ENCODE measurements at regions of chr1 and their contacts with region 1.

Region 1: DNA sequence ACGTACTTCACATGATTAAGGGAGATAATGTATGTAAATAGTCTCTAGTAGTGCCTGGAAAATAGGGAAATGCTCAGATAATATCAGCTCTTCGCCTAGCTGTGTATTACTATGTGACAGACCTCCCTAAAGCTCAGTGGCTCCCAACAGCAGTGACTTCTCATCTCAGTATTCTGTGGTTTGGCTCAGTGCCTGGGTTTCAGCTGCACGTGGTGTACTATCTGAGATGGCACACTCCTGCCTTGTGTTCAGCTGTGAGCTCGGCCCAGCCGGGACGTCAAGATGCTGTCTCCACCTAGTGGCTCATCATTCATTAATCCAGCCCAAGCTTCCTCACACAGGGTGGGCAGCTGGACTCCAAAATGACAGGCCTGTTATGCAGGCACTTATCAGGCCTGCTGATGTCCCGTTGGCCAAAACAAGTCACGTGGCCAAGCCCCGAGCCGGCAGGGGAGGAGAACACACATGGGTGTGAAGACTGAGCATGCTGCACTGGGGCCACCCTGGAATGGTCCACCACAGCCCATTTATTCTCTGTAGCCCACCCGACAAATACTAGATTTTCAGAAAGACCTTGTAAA is 17.8 kb downstream of the SLFNL1 start:
- DNase-seq: peak; percentile 82 to 93 (median 87)
- H3K4me3 ChIP-seq: no peak overlapping the region
- H3K4me3 Mint-ChIP-seq: peak overlapping the region in 4 of 8 donors; percentile 1 to 48 (median 18)
- H3K27ac ChIP-seq: no peak overlapping the region
- H3K27ac Mint-ChIP-seq: peak overlapping the region; percentile 11 to 86 (median 77)
- H3K4me1 ChIP-seq: peaks cover 17% of the 10 kb centered on the region
- H3K4me1 Mint-ChIP-seq: peaks cover 11 to 28% (median 20%) of the 10 kb centered on the region in 4 donors
- H3K27me3 ChIP-seq: no peaks in the 10 kb centered on the region
- H3K27me3 Mint-ChIP-seq: no peaks in the 10 kb centered on the region

Region 2: GRCh38 chr1:40979233-40980067 is 24.3 kb before region 1 on chr1 and contains the start of gene CTPS1:
- CTCF ChIA-PET with region 1: interaction called, 32 read pairs
- POLR2A ChIA-PET with region 1: interaction called, 25 read pairs
- intact Hi-C with region 1: loop called (anchors 1 kb)
- DNase-seq: peak; percentile 94 to 96 (median 95)
- H3K4me3 ChIP-seq: peak within 1 kb of the TSS; percentile 45 to 80
- H3K4me3 Mint-ChIP-seq: peak within 1 kb of the TSS; percentile 83 to 97 (median 90)
- H3K27ac ChIP-seq: peak within 1 kb of the TSS; percentile 81
- H3K27ac Mint-ChIP-seq: peak within 1 kb of the TSS; percentile 88 to 98 (median 92)
- H3K4me1 ChIP-seq: peaks cover 25% of the 10 kb centered on the region
- H3K4me1 Mint-ChIP-seq: peaks cover 17 to 31% (median 22%) of the 10 kb centered on the region in 4 donors
- H3K27me3 ChIP-seq: no peaks in the 10 kb centered on the region
- H3K27me3 Mint-ChIP-seq: no peaks in the 10 kb centered on the region
- total RNA-seq, gene CTPS1: 18.5 to 19.7 TPM

Region 3: DNA sequence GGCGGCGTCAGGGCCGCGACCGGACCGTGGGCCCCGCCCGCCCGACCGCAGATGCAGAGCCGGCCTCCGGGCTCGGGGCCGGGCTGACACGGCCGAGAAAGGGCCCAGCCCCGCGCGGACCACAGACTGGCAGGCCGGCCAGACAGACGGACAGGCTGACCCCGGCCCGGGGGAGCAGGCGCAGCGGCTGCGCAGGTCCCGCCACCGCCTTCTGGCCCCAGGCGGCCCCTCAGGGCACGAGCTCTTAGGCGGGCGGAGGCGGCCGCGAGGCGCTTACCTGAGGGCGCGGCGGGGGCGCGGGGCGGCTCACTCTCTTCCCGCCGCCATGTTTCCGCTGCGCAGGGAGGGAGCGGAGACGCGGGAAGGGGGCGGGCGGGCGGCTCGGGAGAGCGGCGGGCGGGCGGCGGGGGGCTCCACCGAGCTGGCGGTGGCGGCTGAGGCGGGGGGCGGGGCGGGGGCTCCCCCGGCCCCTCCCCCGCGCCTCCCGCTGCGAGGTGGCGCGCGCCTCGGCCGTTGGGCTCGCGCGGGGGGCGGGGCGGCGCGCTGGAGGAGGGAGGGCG is 238.1 kb after region 1 on chr1 and contains the start of gene SCMH1:
- CTCF ChIA-PET with region 1: interaction called, 4 read pairs
- POLR2A ChIA-PET with region 1: interaction called, 3 read pairs
- intact Hi-C with region 1: loop called (anchors 5 kb)
- DNase-seq: peak; percentile 50 to 69 (median 58)
- H3K4me3 ChIP-seq: peak within 1 kb of the TSS; percentile 31 to 51
- H3K4me3 Mint-ChIP-seq: peak within 1 kb of the TSS; percentile 84 to 91 (median 89)
- H3K27ac ChIP-seq: peak within 1 kb of the TSS; percentile 51
- H3K27ac Mint-ChIP-seq: peak within 1 kb of the TSS; percentile 86 to 95 (median 92)
- H3K4me1 ChIP-seq: peaks cover 20% of the 10 kb centered on the region
- H3K4me1 Mint-ChIP-seq: peaks cover 15 to 24% (median 20%) of the 10 kb centered on the region in 4 donors
- H3K27me3 ChIP-seq: no peaks in the 10 kb centered on the region
- H3K27me3 Mint-ChIP-seq: no peaks in the 10 kb centered on the region
- total RNA-seq, gene SCMH1: 19.7 to 27.3 TPM